ACHN (cell line): ENCODE measurements at regions of chr6 and their contacts with region 1.

Region 1: DNA sequence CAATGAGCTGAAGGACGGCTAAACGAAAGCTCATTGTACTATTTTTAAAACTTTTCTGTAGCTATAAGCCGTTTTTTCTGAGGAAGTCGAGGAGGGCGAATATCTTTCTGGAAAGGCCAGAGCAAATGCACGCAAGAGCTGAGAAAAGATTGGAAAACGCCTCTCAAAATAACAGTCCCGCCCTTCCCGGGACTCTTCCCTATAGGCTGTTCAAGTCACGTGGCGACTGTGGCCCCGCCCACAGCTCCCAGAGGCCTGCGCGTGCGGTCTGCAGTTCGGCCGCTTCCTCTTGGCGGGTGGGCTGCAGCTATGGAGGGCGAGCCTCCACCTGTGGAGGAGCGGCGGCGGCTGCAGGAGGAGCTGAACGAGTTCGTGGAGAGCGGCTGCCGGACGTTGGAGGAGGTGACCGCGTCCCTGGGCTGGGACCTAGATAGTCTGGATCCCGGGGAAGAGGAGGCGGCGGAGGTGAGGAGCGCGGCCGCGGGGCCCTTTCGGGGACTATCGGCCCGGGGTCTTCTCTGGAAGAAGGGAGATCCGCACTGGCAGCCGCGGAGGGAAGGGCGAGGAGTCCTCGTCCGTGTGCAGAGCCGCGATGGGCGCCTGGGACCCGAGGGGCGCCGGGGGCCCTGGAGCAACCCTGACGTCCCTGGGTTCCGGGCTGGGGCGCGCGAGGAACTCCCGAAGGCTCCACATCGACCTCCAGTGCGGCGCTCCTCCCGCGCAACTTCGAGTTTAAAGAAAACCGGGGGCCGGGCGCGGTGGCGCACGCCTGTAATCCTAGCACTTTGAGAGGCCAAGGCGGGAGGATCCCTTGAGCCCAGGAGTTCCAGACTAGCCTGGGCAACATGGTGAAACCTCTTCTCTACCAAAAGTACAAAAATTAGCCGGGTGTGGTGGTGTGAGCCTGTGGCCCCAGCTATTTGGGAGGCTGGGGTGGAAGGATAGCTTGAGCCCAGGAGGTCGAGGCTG is at the start of gene SNRNP48:
- DNase-seq: peak; percentile 91

Region 2: DNA sequence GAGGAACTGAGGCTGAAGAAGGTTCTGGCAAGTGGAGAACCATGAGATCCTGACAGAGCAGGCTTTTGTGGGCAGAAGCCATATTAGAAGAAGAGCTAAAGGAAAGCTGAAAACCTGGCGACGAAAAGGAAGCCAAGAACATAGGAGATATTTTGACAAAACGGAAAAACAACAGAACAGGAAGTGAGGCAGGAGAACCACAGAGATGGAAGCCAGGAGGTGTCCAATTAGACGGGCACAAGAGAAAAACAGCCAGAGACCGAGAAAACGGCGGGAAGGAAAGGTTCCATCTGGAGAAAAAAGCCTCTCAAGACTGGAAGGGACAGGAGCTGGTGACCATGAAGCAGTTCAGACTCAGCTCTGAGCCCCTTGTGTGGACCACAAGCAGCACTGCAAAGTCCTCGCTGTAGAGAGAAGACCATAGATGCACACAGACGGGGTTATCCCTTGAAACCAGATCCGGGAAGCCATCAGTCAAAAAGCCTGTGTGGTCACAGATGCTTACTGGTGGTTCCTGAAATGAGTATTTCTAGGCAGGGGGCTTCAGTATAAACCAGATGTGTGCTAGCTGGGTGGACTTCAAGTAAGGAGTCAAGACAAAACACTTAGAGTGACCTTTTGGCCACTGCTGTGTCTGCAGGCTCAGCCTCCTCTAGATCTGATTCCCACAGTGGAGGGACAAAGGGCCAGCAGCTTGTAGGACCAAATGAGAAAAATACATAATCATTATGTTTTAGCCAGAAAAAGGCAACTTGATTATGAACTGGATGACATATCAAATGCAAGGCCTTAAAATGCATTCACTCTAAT is 307.9 kb before region 1 on chr6:
- in situ Hi-C with region 1: loop called (anchors 25 kb)
- DNase-seq: no peak

Region 3: DNA sequence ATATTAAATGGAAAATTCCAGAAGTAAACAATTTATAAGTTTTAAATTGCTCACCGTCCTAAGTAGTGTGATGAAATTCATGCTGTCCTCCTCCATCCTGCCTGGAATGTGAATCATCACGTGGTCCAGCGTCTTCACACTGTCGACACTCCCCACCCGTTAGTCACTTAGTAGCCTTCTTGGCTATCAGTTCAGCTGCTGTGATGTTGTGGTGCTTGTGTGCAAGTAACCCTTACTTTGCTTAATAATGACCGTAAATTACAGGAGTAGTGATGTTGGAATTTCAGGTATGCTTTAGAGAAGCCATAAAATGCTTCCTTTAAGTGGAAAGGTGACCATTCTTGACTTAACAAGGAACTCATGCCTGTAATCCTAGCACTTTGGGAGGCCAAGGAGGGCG is 175.4 kb before region 1 on chr6:
- in situ Hi-C with region 1: no loop called
- DNase-seq: no peak